ENCODE measurements at regions of chr3 and their contacts with region 1.

Region 1: DNA sequence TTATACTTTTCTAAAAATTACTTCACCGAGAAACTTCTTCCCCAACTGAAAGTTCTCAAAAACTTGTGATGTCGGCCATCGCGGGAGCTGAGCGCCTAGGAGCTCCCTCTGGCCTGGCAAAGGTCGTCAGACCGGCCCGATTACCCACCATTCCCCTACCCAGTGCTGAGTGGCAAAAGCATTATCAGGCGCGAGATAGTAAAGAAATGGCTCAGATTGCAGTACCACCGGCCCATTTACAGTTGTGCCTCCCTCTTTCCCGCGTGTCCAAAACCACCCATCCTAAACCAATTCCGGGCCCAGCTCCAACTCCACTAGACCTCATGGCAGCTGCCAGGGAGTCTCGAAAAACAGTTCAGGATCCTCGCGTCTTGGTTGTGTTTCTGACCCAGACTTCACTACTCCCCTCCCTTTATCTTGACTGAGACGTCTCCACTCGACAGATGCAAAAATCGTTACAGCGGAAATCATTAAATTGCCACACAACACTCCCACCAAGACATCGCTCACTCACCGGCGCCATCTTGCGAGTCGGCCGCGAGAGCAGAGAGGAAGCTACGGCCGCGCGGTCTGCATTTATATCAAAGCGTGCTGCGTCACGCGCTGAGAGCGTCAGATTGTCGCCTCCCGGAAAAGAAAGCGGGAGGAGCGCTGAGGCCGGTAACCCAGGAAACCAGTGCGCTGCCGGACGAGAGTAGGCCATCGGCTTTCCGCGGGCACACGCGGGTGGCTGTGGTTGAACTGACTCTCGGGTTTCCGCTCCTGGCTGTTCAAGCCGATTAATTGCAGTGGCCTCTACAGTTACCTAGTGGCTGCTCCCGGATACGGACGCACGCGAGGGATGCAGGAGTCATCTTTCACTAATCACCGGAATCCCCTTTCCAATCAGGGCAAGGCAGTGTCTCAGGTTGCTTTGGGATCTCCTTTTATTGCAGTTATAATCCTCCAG is at the start of gene RPL22L1:
- DNase-seq: peak; percentile 72 to 97
- H3K4me3 ChIP-seq: peak within 1 kb of the TSS; percentile 73 to 82
- H3K27ac ChIP-seq: peak within 1 kb of the TSS; percentile 69 to 89
- H3K4me1 ChIP-seq: peaks cover 0 to 20% of the 10 kb centered on the region in 2 donors
- H3K27me3 ChIP-seq: no peaks in the 10 kb centered on the region
- CTCF ChIP-seq: peak in 1 of 3 experiments; percentile 30
- total RNA-seq, gene RPL22L1: 39.2 TPM

Region 2: GRCh38 chr3:170180908-170181879 is 688.7 kb before region 1 on chr3 and contains the start of gene PHC3:
- intact Hi-C with region 1: loop called (anchors 5 kb)
- DNase-seq: peak; percentile 78 to 97
- H3K4me3 ChIP-seq: peak within 1 kb of the TSS; percentile 80 to 85
- H3K27ac ChIP-seq: peak within 1 kb of the TSS; percentile 97 to 98
- H3K4me1 ChIP-seq: peaks cover 0 to 15% of the 10 kb centered on the region in 2 donors
- H3K27me3 ChIP-seq: no peaks in the 10 kb centered on the region
- CTCF ChIP-seq: peak in 1 of 3 experiments; percentile 22
- total RNA-seq, gene PHC3: 43.3 TPM

Region 3: GRCh38 chr3:170317954-170318353 is 552.0 kb before region 1 on chr3:
- intact Hi-C with region 1: loop called (anchors 10 kb)
- DNase-seq: no peak
- H3K4me3 ChIP-seq: no peak overlapping the region
- H3K27ac ChIP-seq: no peak overlapping the region
- H3K4me1 ChIP-seq: no peaks in the 10 kb centered on the region
- H3K27me3 ChIP-seq: no peaks in the 10 kb centered on the region
- CTCF ChIP-seq: no peak

Region 4: GRCh38 chr3:170641510-170642236 is 228.2 kb before region 1 on chr3:
- intact Hi-C with region 1: no loop called
- DNase-seq: no peak
- H3K4me3 ChIP-seq: no peak overlapping the region
- H3K27ac ChIP-seq: no peak overlapping the region
- H3K4me1 ChIP-seq: peaks cover 0 to 3% of the 10 kb centered on the region in 2 donors
- H3K27me3 ChIP-seq: no peaks in the 10 kb centered on the region
- CTCF ChIP-seq: no peak

Region 5: DNA sequence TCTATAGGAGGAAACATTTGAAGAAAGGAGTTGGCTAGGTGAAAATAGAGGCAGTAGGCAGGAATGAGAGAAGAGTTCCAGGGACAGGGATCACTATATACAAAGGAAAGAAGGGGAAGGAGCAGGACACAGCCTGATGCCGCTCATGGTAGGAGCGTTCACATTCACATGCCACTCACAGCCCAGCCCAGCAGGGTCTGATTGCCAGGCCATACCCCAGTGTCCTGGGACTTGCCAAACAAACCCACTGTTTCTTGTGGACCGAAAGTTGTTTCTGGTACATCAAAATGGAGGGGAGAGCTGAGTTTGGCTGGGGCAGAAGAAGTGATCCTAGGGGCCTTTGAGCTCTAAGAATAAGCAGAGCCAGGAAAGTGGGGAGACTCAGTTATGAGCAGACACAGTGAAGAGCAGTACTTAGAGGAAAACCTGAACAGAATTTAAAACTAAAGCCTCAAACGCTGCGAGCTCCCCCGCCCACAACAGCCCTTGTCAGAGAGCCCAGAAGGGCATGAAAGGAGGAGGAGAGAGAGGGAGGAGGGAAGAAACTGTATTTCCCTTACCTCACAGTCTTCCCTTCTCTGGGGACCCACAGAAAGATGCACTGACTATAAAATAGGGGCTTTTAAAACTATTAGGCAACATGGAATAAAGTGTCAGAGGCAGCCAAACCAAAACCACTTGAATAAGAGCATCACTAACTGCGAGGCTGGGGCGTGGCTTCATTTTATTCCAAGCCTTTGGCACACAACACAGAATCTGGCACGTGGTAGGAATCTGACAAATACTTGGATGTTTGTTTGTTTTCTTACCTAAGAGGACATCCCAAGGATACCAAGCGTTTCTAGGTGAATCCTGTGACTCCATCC is 129.0 kb before region 1 on chr3:
- intact Hi-C with region 1: loop called (anchors 10 kb)
- DNase-seq: peak in 1 of 2 donors; percentile 75
- H3K4me3 ChIP-seq: peak overlapping the region in 1 of 2 donors; percentile 34
- H3K27ac ChIP-seq: peak overlapping the region; percentile 78 to 83
- H3K4me1 ChIP-seq: peaks cover 0 to 22% of the 10 kb centered on the region in 2 donors
- H3K27me3 ChIP-seq: no peaks in the 10 kb centered on the region
- CTCF ChIP-seq: no peak

Region 6: DNA sequence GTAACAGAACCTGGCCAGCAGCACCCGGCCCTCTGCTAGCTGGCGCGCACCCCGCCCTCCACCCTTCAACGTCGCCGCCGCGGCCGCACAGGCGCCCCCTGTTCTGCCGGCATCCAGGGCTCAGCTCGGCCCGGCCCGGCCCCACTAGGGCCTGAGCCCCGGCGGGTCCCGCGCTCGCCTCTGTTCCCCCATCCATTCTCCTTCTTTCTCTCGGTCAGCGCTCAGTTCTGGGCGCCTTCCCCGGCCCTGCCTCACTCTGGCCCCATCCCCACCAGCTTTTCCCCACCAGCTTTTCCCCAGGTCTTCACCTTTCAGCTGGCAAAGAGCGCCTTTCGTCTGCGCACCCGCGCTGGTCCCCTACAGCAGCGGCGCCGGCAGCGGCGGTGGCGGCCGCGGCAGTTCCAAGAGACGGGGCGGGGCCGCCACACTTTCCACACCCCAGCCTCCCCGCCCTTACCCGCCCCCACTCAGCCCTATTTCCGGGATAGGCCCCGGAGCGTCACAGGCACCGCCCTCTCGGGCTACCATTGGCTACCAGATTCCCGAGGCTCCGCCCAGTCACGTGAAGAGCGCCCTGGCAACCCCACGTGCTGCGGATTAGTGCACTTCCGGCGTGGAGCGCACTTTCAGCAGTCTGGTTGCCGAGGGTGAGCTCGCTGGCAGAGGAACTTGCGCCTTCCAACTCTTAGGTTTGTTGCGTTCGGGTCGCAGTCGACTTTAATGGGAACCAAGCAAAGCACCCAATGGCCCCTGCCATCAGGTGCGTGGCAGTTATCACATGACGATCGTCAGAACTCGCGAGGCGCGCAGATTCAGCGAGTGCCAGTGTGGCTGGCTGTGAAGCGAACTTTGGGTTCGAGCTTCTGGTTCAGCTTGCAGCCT is 38.6 kb after region 1 on chr3 and contains the start of gene EIF5A2:
- intact Hi-C with region 1: loop called (anchors 2 kb)
- DNase-seq: peak; percentile 85 to 97
- H3K4me3 ChIP-seq: peak within 1 kb of the TSS; percentile 86 to 95
- H3K27ac ChIP-seq: peak within 1 kb of the TSS; percentile 79 to 85
- H3K4me1 ChIP-seq: peaks cover 0 to 6% of the 10 kb centered on the region in 2 donors
- H3K27me3 ChIP-seq: no peaks in the 10 kb centered on the region
- CTCF ChIP-seq: peak in 1 of 3 experiments; percentile 8
- total RNA-seq, gene EIF5A2: 28.6 TPM